Activated CD4-positive, alpha-beta T cell treated with anti-CD3 and anti-CD28 coated beads for 36 hours (primary cell): ENCODE measurements at regions of chr2 and their contacts with region 1.

Region 1: DNA sequence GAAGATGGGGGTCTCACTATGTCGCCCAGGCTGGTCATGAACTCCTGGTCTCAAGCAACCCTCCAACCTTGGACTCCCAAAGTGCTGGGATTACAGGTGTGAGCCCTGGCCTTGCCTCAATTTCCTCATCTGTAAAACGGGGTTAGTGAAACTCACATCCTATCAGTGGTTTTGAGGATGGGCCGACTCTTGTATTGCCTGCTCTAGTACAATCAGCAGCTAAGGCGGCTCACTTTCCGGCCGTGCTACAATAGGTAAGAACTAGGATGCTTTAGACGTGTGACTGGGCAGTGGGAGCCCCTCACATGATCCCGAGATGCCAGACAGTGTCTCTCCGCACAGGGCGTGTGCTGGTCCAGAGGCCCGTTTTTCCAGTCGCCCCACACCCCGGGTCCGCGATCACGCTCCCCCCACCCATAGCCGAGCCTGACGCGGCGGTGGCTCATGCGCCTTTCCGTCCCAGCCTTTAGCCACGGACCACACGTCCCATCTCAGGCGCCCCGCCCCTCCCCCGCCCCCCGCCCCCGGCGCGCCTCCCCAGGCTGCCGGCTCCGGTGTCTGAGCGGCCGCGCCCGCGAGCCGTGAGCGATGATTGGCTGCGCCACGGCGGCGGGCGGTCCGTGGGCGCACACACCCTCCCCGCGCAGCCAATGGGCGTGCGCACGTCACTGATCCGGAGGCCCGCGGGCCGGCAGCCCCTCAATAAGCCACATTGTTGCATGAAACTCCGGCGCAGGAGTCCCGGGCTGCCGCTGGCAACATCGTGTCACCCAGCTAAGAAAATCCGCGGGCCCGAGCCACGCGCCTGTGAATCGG is at the start of gene HK2:
- DNase-seq: peak; percentile 93
- ATAC-seq: peak; percentile 86
- H3K4me3 Mint-ChIP-seq: peak within 1 kb of the TSS; percentile 89
- H3K27ac Mint-ChIP-seq: peak within 1 kb of the TSS; percentile 95
- H3K4me1 Mint-ChIP-seq: peaks cover 48% of the 10 kb centered on the region
- H3K27me3 Mint-ChIP-seq: no peaks in the 10 kb centered on the region
- total RNA-seq, gene HK2: 84.4 to 105 TPM

Region 2: GRCh38 chr2:74391580-74392448 is 441.8 kb before region 1 on chr2:
- CTCF ChIA-PET with region 1: no interaction called
- POLR2A ChIA-PET with region 1: no interaction called
- intact Hi-C with region 1: loop called in 1 of 2 experiments (anchors 2 kb)
- DNase-seq: peak; percentile 98
- ATAC-seq: peak; percentile 78
- H3K4me3 Mint-ChIP-seq: peak overlapping the region; percentile 86
- H3K27ac Mint-ChIP-seq: peak overlapping the region; percentile 99
- H3K4me1 Mint-ChIP-seq: peaks cover 7% of the 10 kb centered on the region
- H3K27me3 Mint-ChIP-seq: no peaks in the 10 kb centered on the region

Region 3: GRCh38 chr2:74653985-74654882 is 179.4 kb before region 1 on chr2 and contains the start of gene SEMA4F:
- CTCF ChIA-PET with region 1: interaction called, 3 read pairs
- POLR2A ChIA-PET with region 1: no interaction called
- intact Hi-C with region 1: loop called in 1 of 2 experiments (anchors 1 kb)
- DNase-seq: peak; percentile 97
- ATAC-seq: peak; percentile 100
- H3K4me3 Mint-ChIP-seq: peak within 1 kb of the TSS; percentile 76
- H3K27ac Mint-ChIP-seq: peak within 1 kb of the TSS; percentile 49
- H3K4me1 Mint-ChIP-seq: peaks cover 13% of the 10 kb centered on the region
- H3K27me3 Mint-ChIP-seq: peaks cover 7% of the 10 kb centered on the region
- total RNA-seq, gene SEMA4F: 5.7 to 7.4 TPM

Region 4: DNA sequence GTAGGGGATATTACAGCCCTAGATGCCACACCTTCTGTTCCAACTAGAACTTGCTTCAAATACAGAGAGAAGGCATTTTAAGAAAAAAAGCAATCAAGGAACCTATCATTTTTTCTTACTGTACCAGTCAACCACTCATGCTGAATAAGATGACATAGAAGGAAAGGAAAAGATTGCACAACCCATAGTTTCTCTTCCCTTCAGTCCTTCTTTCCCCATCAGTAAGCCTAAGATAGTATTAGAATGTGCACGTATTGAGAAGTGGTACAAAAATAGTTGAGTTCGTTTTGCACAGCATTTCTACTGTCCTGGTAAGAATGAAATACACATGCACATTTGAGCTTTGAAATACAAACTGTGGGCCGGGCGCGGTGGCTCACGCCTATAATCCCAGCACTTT is 26.7 kb before region 1 on chr2:
- CTCF ChIA-PET with region 1: no interaction called
- POLR2A ChIA-PET with region 1: no interaction called
- intact Hi-C with region 1: no loop called
- DNase-seq: no peak
- ATAC-seq: no peak
- H3K4me3 Mint-ChIP-seq: no peak overlapping the region
- H3K27ac Mint-ChIP-seq: no peak overlapping the region
- H3K4me1 Mint-ChIP-seq: no peaks in the 10 kb centered on the region
- H3K27me3 Mint-ChIP-seq: no peaks in the 10 kb centered on the region

Region 5: DNA sequence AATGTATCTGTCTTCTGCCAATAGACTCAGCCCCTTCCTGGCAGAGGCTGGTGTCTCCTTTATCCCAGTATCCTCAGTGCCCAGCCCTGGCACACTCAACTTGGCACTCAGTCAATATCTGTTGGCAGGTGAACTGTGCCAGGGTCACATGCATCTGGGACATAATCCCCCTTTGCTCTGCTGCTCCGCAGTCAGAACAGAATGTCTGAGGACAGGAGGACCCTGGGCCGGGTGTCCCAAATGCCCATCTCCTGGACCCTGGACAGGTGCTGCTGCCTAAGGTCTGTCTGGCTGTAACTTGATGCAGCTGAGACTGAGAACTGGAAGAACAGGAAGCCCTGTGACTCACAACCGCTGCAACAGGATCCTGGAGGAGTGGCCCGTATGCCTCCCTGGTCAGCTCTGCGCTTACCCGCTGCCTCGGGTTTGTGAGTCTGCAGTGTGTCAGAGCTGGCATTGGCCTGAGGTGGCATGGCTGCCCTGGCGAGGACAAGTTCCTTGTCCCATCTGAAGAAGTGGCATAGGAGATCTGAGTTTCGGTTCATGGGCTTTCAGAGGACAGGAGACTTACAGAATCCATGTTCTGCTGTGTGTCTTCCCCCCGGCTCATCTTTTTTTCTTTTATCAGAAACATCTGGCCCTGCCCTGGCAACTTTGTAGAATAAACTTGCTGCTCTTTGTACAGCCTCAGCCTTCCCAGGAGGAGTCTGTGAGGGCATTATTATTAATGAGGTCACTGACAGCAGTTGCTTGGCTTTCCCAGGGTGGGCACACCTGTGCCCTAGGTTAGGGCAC is 11.8 kb after region 1 on chr2:
- CTCF ChIA-PET with region 1: interaction called, 24 read pairs
- POLR2A ChIA-PET with region 1: interaction called, 4 read pairs
- intact Hi-C with region 1: loop called in 1 of 2 experiments (anchors 1 kb)
- DNase-seq: peak; percentile 49
- ATAC-seq: peak; percentile 33
- H3K4me3 Mint-ChIP-seq: no peak overlapping the region
- H3K27ac Mint-ChIP-seq: no peak overlapping the region
- H3K4me1 Mint-ChIP-seq: peaks cover 95% of the 10 kb centered on the region
- H3K27me3 Mint-ChIP-seq: no peaks in the 10 kb centered on the region

Region 6: GRCh38 chr2:74958274-74959105 is 124.9 kb after region 1 on chr2 and contains the start of gene POLE4:
- CTCF ChIA-PET with region 1: no interaction called
- POLR2A ChIA-PET with region 1: no interaction called
- intact Hi-C with region 1: loop called (anchors 1 to 2 kb)
- DNase-seq: peak; percentile 97
- ATAC-seq: peak; percentile 92
- H3K4me3 Mint-ChIP-seq: peak within 1 kb of the TSS; percentile 68
- H3K27ac Mint-ChIP-seq: peak within 1 kb of the TSS; percentile 88
- H3K4me1 Mint-ChIP-seq: peaks cover 72% of the 10 kb centered on the region
- H3K27me3 Mint-ChIP-seq: no peaks in the 10 kb centered on the region
- total RNA-seq, gene POLE4: 29.3 to 44.0 TPM